GM12878 (cell line): ENCODE measurements at regions of chr1 and their contacts with region 1.

Region 1: GRCh38 chr1:200488375-200489165 is 78.7 kb upstream of the ZNF281 start:
- DNase-seq: peak; percentile 37
- ATAC-seq: peak; percentile 85
- H3K4me3 ChIP-seq: no peak overlapping the region
- H3K27ac ChIP-seq: no peak overlapping the region
- H3K4me1 ChIP-seq: peaks cover 8% of the 10 kb centered on the region
- H3K27me3 ChIP-seq: no peaks in the 10 kb centered on the region
- CTCF ChIP-seq: peak; percentile 72 to 90 (median 86)
- EP300 ChIP-seq: no peak
- POLR2A ChIP-seq: no peak
- RAD21 ChIP-seq: peak; percentile 99

Region 2: GRCh38 chr1:200139661-200140250 is 348.8 kb before region 1 on chr1:
- CTCF ChIA-PET with region 1: interaction called, 13 read pairs
- POLR2A ChIA-PET with region 1: no interaction called
- RAD21 ChIA-PET with region 1: interaction called, 6 read pairs
- SMC1A ChIA-PET with region 1: interaction called, 15 read pairs
- in situ Hi-C with region 1: loop called (anchors 5 kb)
- intact Hi-C with region 1: loop called (anchors 1 kb)
- DNase-seq: no peak
- ATAC-seq: peak; percentile 99
- H3K4me3 ChIP-seq: no peak overlapping the region
- H3K27ac ChIP-seq: no peak overlapping the region
- H3K4me1 ChIP-seq: no peaks in the 10 kb centered on the region
- H3K27me3 ChIP-seq: no peaks in the 10 kb centered on the region
- CTCF ChIP-seq: peak; percentile 70 to 75 (median 73)
- EP300 ChIP-seq: no peak
- POLR2A ChIP-seq: no peak
- RAD21 ChIP-seq: peak; percentile 82

Region 3: GRCh38 chr1:200279810-200280411 is 208.7 kb before region 1 on chr1:
- CTCF ChIA-PET with region 1: interaction called, 119 read pairs
- POLR2A ChIA-PET with region 1: no interaction called
- RAD21 ChIA-PET with region 1: interaction called, 21 read pairs
- SMC1A ChIA-PET with region 1: interaction called, 55 read pairs
- in situ Hi-C with region 1: loop called (anchors 5 kb)
- intact Hi-C with region 1: loop called (anchors 1 kb)
- DNase-seq: no peak
- ATAC-seq: peak; percentile 58
- H3K4me3 ChIP-seq: no peak overlapping the region
- H3K27ac ChIP-seq: no peak overlapping the region
- H3K4me1 ChIP-seq: 0 out of 2 replicates have a peak, but pooled peaks cover 5% of the 10 kb centered on the region
- H3K27me3 ChIP-seq: no peaks in the 10 kb centered on the region; a peak in 1 of 4 replicates
- CTCF ChIP-seq: peak; percentile 66 to 72 (median 71)
- EP300 ChIP-seq: no peak
- POLR2A ChIP-seq: no peak
- RAD21 ChIP-seq: peak; percentile 83

Region 4: DNA sequence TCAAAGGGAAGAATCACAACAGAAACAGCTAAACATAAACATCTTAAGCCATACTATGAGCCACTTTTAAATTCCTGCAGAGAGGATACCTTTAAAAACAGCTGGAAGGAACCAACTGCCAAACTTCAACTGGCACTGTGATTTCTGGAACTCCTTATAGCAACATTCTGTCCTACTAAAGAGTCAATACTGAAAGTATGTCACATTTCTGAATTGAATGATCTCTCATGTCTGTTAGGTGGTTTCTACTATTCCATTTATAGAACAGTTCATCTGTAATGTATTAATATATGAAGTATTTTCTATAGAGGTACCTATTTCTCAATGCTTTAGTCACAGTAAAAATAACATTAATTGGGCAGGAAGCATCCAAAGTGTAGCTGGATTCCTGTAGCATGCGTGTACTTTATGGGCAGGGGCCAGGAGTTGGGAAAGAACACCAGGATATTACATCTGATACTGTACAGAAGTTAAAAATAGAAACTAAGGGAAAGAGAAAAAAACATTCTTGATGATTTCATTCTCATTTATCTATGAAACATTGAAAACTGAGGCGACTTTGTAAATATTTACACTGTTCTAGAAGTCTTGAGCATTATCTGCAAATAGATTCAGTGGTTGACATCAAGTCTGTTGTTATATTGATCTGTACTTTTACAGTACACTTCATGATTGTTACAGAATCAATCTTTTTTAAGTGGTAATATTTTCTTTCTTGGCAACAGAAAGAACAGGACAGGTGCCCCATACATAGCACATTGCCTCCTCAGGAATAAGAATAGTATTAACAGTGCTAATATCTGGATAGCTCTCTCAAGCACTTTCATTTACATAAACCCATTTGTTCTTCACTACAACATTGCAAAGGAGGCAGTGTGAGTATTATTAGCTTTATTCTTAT is 72.6 kb before region 1 on chr1:
- CTCF ChIA-PET with region 1: interaction called, 5 read pairs
- POLR2A ChIA-PET with region 1: no interaction called
- RAD21 ChIA-PET with region 1: interaction called, 11 read pairs
- SMC1A ChIA-PET with region 1: interaction called, 11 read pairs
- in situ Hi-C with region 1: no loop called
- intact Hi-C with region 1: no loop called
- DNase-seq: no peak
- ATAC-seq: peak; percentile 87
- H3K4me3 ChIP-seq: peak overlapping the region; percentile 45
- H3K27ac ChIP-seq: peak overlapping the region; percentile 80
- H3K4me1 ChIP-seq: peaks cover 13% of the 10 kb centered on the region; the same call in 1 of the 2 replicates
- H3K27me3 ChIP-seq: no peaks in the 10 kb centered on the region
- CTCF ChIP-seq: no peak
- EP300 ChIP-seq: peak in 1 of 2 experiments; percentile 72; a peak in 2 of 4 replicates
- POLR2A ChIP-seq: no peak
- RAD21 ChIP-seq: no peak

Region 5: DNA sequence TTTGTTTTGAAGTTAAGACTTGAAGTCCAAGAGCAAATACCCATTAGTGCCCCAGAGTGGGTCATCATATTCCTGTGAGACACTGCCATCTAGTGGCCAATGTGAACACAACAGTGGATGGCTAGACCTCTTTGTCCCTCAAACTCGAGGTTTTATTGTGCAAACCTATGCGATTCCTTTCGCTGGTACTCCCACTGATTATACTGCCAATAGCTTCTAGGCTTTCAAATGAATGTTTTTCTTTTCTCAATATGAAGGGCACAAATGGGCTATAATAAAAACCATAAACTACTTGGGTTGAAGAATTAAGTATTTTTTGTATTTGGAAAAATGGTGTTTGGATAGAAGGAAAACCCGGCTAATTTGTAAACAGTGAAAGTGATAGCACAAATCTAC is 21.7 kb after region 1 on chr1:
- CTCF ChIA-PET with region 1: interaction called, 32 read pairs
- POLR2A ChIA-PET with region 1: interaction called, 4 read pairs
- RAD21 ChIA-PET with region 1: interaction called, 5 read pairs
- SMC1A ChIA-PET with region 1: interaction called, 11 read pairs
- in situ Hi-C with region 1: no loop called
- intact Hi-C with region 1: no loop called
- DNase-seq: peak; percentile 39
- ATAC-seq: peak; percentile 99
- H3K4me3 ChIP-seq: no peak overlapping the region
- H3K27ac ChIP-seq: no peak overlapping the region
- H3K4me1 ChIP-seq: no peaks in the 10 kb centered on the region
- H3K27me3 ChIP-seq: no peaks in the 10 kb centered on the region; a peak in 2 of 4 replicates
- CTCF ChIP-seq: peak; percentile 75 to 95 (median 83)
- EP300 ChIP-seq: no peak
- POLR2A ChIP-seq: no peak
- RAD21 ChIP-seq: peak; percentile 97

Region 6: GRCh38 chr1:200542162-200542561 is 53.6 kb after region 1 on chr1:
- CTCF ChIA-PET with region 1: no interaction called
- POLR2A ChIA-PET with region 1: no interaction called
- RAD21 ChIA-PET with region 1: no interaction called
- SMC1A ChIA-PET with region 1: no interaction called
- in situ Hi-C with region 1: no loop called
- intact Hi-C with region 1: no loop called
- DNase-seq: no peak
- ATAC-seq: no peak
- H3K4me3 ChIP-seq: no peak overlapping the region
- H3K27ac ChIP-seq: no peak overlapping the region
- H3K4me1 ChIP-seq: peaks cover 4% of the 10 kb centered on the region
- H3K27me3 ChIP-seq: no peaks in the 10 kb centered on the region
- CTCF ChIP-seq: no peak
- EP300 ChIP-seq: no peak
- POLR2A ChIP-seq: no peak
- RAD21 ChIP-seq: no peak